CD8-positive, alpha-beta memory T cell (primary cell): ENCODE measurements at regions of chr19 and their contacts with region 1.

Region 1: GRCh38 chr19:38647368-38647965 is at the start of gene ACTN4:
- DNase-seq: peak; percentile 100
- H3K4me3 ChIP-seq: peak within 1 kb of the TSS; percentile 71
- H3K4me3 Mint-ChIP-seq: peak within 1 kb of the TSS; percentile 90 to 98 (median 94)
- H3K27ac ChIP-seq: peak within 1 kb of the TSS; percentile 84
- H3K27ac Mint-ChIP-seq: peak within 1 kb of the TSS; percentile 75 to 99 (median 90)
- H3K4me1 ChIP-seq: peaks cover 30% of the 10 kb centered on the region
- H3K4me1 Mint-ChIP-seq: peaks cover 39 to 49% (median 48%) of the 10 kb centered on the region in 3 donors
- H3K27me3 ChIP-seq: no peaks in the 10 kb centered on the region
- H3K27me3 Mint-ChIP-seq: no peaks in the 10 kb centered on the region
- total RNA-seq, gene ACTN4: 295 to 314 TPM

Region 2: GRCh38 chr19:38683393-38684080 is 36.1 kb after region 1 on chr19:
- CTCF ChIA-PET with region 1: interaction called, 3 read pairs
- POLR2A ChIA-PET with region 1: interaction called, 13 read pairs
- DNase-seq: peak in 4 of 5 donors; percentile 34 to 82 (median 61)
- H3K4me3 ChIP-seq: peak overlapping the region; percentile 4
- H3K4me3 Mint-ChIP-seq: peak overlapping the region; percentile 62 to 87 (median 71)
- H3K27ac ChIP-seq: peak overlapping the region; percentile 74
- H3K27ac Mint-ChIP-seq: peak overlapping the region; percentile 84 to 99 (median 97)
- H3K4me1 ChIP-seq: peaks cover 79% of the 10 kb centered on the region
- H3K4me1 Mint-ChIP-seq: peaks cover 82 to 94% (median 88%) of the 10 kb centered on the region in 3 donors
- H3K27me3 ChIP-seq: no peaks in the 10 kb centered on the region
- H3K27me3 Mint-ChIP-seq: no peaks in the 10 kb centered on the region